Activated T-helper 2 cell treated with anti-CD3 and anti-CD28 coated beads, Interferon-gamma antibody, Interleukin-2, Interleukin-4, amounts not matched to agents 10 μg/mL and 5 μg/mL and 100 μg/mL, durations not matched to agents 14 hours and 24 hours and 36 hours (primary cell): ENCODE measurements at regions of chr19 and their contacts with region 1.

Region 1: GRCh38 chr19:29610563-29611271 is 4.6 kb downstream of the POP4 start:
- DNase-seq: peak; percentile 78
- H3K4me3 Mint-ChIP-seq: no peak overlapping the region
- H3K27ac Mint-ChIP-seq: peak overlapping the region; percentile 44
- H3K4me1 Mint-ChIP-seq: peaks cover 9% of the 10 kb centered on the region
- H3K27me3 Mint-ChIP-seq: no peaks in the 10 kb centered on the region

Region 2: GRCh38 chr19:29528350-29528945 is 82.3 kb before region 1 on chr19:
- intact Hi-C with region 1: loop called (anchors 5 kb)
- DNase-seq: peak; percentile 62
- H3K4me3 Mint-ChIP-seq: peak overlapping the region; percentile 60
- H3K27ac Mint-ChIP-seq: peak overlapping the region; percentile 33
- H3K4me1 Mint-ChIP-seq: peaks cover 18% of the 10 kb centered on the region
- H3K27me3 Mint-ChIP-seq: peaks cover 56% of the 10 kb centered on the region

Region 3: GRCh38 chr19:29569038-29569911 is 41.4 kb before region 1 on chr19:
- intact Hi-C with region 1: no loop called
- DNase-seq: no peak
- H3K4me3 Mint-ChIP-seq: no peak overlapping the region
- H3K27ac Mint-ChIP-seq: no peak overlapping the region
- H3K4me1 Mint-ChIP-seq: peaks cover 6% of the 10 kb centered on the region
- H3K27me3 Mint-ChIP-seq: peaks cover 23% of the 10 kb centered on the region

Region 4: DNA sequence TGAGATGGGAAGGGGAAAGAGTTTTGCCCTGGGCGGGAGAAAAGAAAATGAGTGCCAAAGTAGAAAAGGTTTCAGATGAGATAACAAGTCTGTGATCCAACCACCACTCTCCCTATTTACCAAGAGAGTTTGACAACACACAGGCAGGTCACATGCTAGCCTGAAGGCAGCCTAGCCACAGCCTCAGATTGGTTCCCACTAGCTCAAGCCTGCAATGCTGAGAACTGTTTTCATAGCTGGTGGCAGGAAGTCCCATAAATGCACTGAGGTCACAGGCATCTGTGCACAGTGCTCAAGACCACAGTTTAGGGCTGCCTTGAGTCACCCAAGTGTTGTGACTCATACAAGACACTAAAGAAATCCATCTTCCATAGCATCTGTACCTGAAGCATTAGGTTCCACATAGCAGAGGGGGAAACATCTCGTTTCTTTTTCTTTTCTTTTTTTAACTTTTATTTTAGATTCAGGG is 23.2 kb before region 1 on chr19:
- intact Hi-C with region 1: loop called (anchors 1 kb)
- DNase-seq: peak; percentile 74
- H3K4me3 Mint-ChIP-seq: no peak overlapping the region
- H3K27ac Mint-ChIP-seq: peak overlapping the region; percentile 62
- H3K4me1 Mint-ChIP-seq: peaks cover 27% of the 10 kb centered on the region
- H3K27me3 Mint-ChIP-seq: peaks cover 21% of the 10 kb centered on the region

Region 5: DNA sequence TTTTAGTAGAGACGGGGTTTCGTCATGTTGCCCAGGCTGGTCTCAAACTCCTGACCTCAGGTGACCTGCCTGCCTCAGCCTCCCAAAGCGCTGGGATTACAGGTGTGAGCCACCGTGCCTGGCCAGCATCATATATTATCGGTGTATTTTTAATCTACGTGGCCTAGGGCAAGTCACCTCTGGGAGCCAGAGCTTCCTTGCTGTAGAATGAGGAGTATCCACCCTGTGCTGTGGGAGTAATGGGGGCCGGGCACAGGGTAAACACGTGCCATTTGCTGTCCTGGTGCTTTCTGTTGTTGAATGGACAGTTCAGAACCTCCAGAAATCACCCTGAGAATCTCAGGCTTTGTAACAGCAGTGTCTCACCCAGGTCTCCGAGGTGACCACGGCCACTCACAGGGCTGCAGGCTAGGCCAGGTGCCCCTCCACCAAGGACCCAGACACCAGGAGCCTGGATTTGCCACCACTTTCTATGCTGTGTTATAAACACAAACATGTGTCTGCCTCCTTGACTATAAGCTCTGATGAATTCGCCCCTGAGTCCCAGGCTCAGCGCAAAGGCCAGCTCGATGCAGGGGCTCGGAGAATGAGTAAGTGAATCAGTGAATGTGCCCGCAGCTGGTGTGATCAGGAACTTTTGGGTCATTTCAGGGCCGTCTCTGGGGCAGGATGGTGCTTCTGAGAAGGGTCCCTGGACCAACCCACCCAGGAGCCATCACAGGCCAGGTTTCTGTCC is 18.1 kb after region 1 on chr19:
- intact Hi-C with region 1: no loop called
- DNase-seq: no peak
- H3K4me3 Mint-ChIP-seq: no peak overlapping the region
- H3K27ac Mint-ChIP-seq: no peak overlapping the region
- H3K4me1 Mint-ChIP-seq: peaks cover 7% of the 10 kb centered on the region
- H3K27me3 Mint-ChIP-seq: no peaks in the 10 kb centered on the region

Region 6: DNA sequence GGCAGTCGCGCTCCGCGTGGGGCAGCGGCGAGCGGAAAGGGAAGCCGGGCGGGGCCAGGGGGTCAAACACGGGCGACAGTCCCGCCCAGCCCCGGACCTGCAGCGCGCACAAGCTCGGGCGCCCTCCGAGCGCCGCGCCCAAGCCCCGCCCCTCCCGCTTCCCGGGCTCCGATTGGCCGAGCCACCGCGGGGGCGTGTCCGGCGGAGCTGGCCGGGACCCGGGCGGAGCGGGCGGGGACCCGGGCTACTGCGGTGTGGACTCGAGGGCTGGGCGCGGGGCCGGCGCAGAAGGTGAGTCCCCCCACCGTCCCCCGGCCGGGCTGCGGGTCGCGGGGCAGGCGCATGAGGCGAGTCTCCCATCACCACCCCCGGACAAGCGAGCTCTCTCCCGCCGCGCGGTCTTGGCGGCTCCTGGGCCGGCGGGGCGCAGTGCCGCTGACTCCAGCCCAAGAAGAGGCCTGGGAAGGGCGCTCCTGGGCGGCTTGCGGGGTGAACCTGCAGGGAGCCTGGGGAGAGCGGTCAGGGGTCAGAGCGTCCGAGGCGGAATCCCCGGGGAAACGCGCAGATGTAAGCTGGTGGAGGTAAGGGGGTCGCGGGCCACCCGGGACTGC is 54.6 kb after region 1 on chr19 and contains the start of gene PLEKHF1:
- intact Hi-C with region 1: loop called (anchors 2 kb)
- DNase-seq: peak; percentile 86
- H3K4me3 Mint-ChIP-seq: peak within 1 kb of the TSS; percentile 85
- H3K27ac Mint-ChIP-seq: peak within 1 kb of the TSS; percentile 61
- H3K4me1 Mint-ChIP-seq: peaks cover 62% of the 10 kb centered on the region
- H3K27me3 Mint-ChIP-seq: no peaks in the 10 kb centered on the region
- total RNA-seq, gene PLEKHF1: 28.0 and 30.3 TPM in 2 replicates

Region 7: GRCh38 chr19:29694669-29695627 is 84.2 kb after region 1 on chr19:
- intact Hi-C with region 1: loop called (anchors 1 kb)
- DNase-seq: peak; percentile 71
- H3K4me3 Mint-ChIP-seq: no peak overlapping the region
- H3K27ac Mint-ChIP-seq: no peak overlapping the region
- H3K4me1 Mint-ChIP-seq: peaks cover 8% of the 10 kb centered on the region
- H3K27me3 Mint-ChIP-seq: no peaks in the 10 kb centered on the region

Region 8: DNA sequence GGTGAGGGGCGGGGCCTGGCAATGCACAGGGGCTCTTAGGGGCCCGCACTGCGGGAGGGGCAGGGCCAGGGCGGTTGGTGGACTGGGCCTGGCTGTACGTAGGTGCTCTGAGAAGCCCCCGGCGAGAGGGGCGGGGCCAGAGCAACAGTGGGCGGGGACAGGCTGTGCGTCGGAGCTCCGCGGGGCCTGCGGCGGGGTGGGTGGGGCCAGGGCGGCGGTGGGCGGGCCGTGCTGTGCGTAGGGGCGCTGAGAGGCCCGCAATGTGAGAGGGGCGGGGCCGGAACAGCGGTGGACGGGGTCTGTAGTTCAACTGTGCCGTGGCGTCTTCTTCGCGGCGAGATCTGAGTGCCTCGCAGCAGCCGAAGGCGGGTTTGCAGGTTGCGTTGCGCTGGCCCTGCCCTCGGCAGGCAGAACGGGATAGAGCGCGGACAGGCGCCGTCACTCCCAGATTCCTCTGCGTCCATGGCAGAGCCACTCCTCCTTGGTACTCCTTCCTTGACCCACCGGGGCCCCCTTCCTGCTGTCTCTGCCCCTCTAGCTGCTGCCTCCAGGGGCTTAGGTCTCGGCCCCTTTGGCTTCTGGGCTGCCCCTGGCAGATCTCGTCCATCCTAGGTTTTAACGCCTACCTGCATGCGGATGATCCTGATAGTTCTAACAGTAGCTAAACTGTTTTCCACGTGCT is 234.3 kb after region 1 on chr19:
- intact Hi-C with region 1: loop called (anchors 10 kb)
- DNase-seq: peak; percentile 93
- H3K4me3 Mint-ChIP-seq: peak overlapping the region; percentile 88
- H3K27ac Mint-ChIP-seq: peak overlapping the region; percentile 80
- H3K4me1 Mint-ChIP-seq: peaks cover 11% of the 10 kb centered on the region
- H3K27me3 Mint-ChIP-seq: peaks cover 9% of the 10 kb centered on the region